ENCODE measurements at regions of chr1 and their contacts with region 1.

Region 1: GRCh38 chr1:204941421-204942338 is 71.0 kb downstream of the NFASC start:
- DNase-seq: peak; percentile 77
- H3K4me3 ChIP-seq: no peak overlapping the region; a peak in 1 of 4 replicates
- H3K27ac ChIP-seq: no peak overlapping the region
- H3K4me1 ChIP-seq: no peaks in the 10 kb centered on the region
- H3K27me3 ChIP-seq: no peaks in the 10 kb centered on the region
- CTCF ChIP-seq: peak; percentile 84
- EP300 ChIP-seq: no peak
- RAD21 ChIP-seq: peak; percentile 77

Region 2: GRCh38 chr1:204565617-204566582 is 375.8 kb before region 1 on chr1:
- CTCF ChIA-PET with region 1: interaction called, 17 read pairs
- POLR2A ChIA-PET with region 1: no interaction called
- DNase-seq: peak; percentile 89
- H3K4me3 ChIP-seq: no peak overlapping the region; a peak in 1 of 4 replicates
- H3K27ac ChIP-seq: no peak overlapping the region
- H3K4me1 ChIP-seq: no peaks in the 10 kb centered on the region; a peak in 1 of 4 replicates
- H3K27me3 ChIP-seq: no peaks in the 10 kb centered on the region
- CTCF ChIP-seq: peak; percentile 82
- EP300 ChIP-seq: no peak
- RAD21 ChIP-seq: peak; percentile 94

Region 3: DNA sequence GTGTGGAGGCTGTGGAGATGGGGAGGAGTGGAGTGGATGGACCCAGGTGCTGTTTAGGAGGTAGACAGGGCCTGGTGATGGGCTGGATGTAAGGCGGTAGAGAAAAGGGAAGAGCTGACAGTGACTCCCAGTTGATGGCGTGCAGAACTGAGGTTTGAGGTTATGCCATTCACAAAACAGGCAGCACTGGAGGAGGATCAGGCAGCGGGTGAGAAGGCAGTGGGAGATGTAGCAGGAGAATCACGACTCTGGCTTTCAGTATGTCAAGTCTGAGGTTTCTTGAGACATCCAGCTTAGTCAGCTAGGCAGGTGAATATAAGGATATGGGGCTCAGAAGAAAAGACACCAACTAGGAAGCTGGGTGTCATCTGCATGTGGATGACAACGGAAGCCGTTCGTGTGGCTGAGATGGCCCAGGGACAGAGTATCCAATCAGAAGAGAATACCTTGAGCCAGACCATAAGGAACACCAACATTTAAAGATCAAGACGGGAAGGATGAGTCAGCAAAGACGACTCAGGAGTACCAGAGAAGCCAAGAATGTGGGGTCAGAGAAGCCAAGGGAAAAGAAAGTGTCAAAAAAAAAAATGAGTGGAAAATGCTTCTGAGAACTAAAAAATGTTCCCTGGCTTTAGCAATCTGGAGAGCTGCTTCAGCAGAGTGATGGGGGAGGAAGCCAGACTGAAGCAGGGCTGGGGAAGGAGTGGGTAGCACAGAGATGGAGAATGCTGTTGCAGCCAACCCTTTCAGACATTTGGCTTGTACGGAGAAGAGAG is 271.3 kb before region 1 on chr1:
- CTCF ChIA-PET with region 1: no interaction called
- POLR2A ChIA-PET with region 1: no interaction called
- DNase-seq: no peak
- H3K4me3 ChIP-seq: no peak overlapping the region
- H3K27ac ChIP-seq: no peak overlapping the region
- H3K4me1 ChIP-seq: peaks cover 0 to 7% of the 10 kb centered on the region in 2 experiments; a peak in 1 of 4 replicates
- H3K27me3 ChIP-seq: 0 out of 2 replicates have a peak, but pooled peaks cover 6% of the 10 kb centered on the region
- CTCF ChIP-seq: no peak
- EP300 ChIP-seq: no peak
- RAD21 ChIP-seq: no peak

Region 4: GRCh38 chr1:204791453-204792353 is 150.0 kb before region 1 on chr1:
- CTCF ChIA-PET with region 1: interaction called, 18 read pairs
- POLR2A ChIA-PET with region 1: no interaction called
- DNase-seq: peak; percentile 75
- H3K4me3 ChIP-seq: peak overlapping the region in 1 of 2 experiments; percentile 42; a peak in 1 of 4 replicates
- H3K27ac ChIP-seq: no peak overlapping the region
- H3K4me1 ChIP-seq: peaks cover 0 to 5% of the 10 kb centered on the region in 2 experiments; a peak in 2 of 4 replicates
- H3K27me3 ChIP-seq: peaks cover 26% of the 10 kb centered on the region; the same call in 1 of the 2 replicates
- CTCF ChIP-seq: peak; percentile 85
- EP300 ChIP-seq: no peak
- RAD21 ChIP-seq: peak; percentile 25; the same call in 1 of the 2 replicates

Region 5: DNA sequence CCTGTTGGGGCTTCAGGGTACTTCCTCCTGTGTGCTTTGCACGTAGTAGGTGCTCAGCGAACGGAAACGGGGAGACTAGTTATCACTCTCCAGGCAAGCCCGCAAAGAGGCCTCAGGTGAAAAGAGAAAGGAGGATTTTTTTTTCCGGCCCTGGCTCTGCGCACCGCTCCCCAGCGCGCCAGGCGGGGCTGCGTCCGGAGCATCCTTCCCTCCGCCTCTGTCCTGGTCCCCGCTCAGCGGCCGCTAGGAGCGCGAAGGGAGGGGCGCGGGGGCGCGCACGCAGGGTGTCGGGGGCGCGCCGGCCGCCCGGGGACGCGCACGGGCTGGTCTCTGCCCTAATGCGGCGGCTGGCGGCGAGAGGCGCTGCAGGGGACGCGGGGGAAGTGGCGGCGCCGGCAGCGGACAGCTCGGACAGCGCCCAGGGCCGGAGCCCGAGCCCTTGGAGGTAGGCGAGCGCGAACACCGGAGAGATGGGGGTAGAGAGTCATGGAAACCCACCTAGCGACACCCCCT is 113.3 kb before region 1 on chr1:
- CTCF ChIA-PET with region 1: interaction called, 132 read pairs
- POLR2A ChIA-PET with region 1: no interaction called
- DNase-seq: peak; percentile 98
- H3K4me3 ChIP-seq: peak overlapping the region; percentile 49 to 54
- H3K27ac ChIP-seq: no peak overlapping the region
- H3K4me1 ChIP-seq: peaks cover 0 to 11% of the 10 kb centered on the region in 2 experiments; a peak in 1 of 4 replicates
- H3K27me3 ChIP-seq: no peaks in the 10 kb centered on the region; the same call in 1 of the 2 replicates
- CTCF ChIP-seq: peak; percentile 26
- EP300 ChIP-seq: no peak
- RAD21 ChIP-seq: no peak

Region 6: DNA sequence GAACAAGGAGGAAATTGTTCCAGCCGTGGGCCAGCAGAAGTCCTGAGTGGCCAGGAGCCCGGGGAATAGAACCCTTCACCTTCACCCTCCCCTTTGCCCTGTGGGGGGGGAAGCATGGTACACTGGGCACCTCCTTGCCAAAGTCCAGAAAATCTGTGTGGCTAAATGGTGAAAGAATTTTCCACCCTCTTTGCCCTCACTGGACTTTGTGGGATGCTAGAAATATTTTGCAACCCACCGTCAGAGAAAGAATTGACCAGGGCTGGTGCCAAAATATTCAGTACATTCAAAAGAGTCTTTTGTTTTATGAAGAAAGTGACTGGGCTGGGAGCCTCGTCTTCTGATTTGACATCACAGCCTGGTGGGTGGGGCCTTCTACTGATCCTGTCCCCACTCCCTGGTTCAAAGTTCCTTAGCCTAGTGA is 56.4 kb before region 1 on chr1:
- CTCF ChIA-PET with region 1: interaction called, 29 read pairs
- POLR2A ChIA-PET with region 1: no interaction called
- DNase-seq: no peak
- H3K4me3 ChIP-seq: no peak overlapping the region
- H3K27ac ChIP-seq: no peak overlapping the region
- H3K4me1 ChIP-seq: peaks cover 0 to 16% of the 10 kb centered on the region in 2 experiments; a peak in 3 of 4 replicates
- H3K27me3 ChIP-seq: no peaks in the 10 kb centered on the region
- CTCF ChIP-seq: no peak
- EP300 ChIP-seq: no peak
- RAD21 ChIP-seq: no peak

Region 7: DNA sequence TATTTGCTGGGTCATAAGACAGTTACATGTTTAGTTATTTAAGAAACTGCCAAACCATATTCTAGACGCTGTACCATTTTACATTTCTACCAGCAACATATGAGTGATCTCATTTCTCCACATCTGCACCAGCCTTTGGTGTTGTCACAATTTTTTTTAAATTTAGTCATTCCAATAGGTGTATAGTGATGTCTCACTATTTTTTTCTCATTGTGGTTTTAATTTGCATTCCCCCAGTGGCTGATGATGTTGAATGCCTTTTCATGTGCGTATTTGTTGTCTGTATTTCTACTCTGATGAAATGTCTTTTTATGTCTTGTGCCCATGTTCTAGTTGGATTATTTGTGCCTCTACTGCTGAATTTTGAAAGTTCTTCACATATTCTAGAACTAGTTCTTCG is 32.6 kb before region 1 on chr1:
- CTCF ChIA-PET with region 1: interaction called, 12 read pairs
- POLR2A ChIA-PET with region 1: no interaction called
- DNase-seq: no peak
- H3K4me3 ChIP-seq: no peak overlapping the region
- H3K27ac ChIP-seq: no peak overlapping the region
- H3K4me1 ChIP-seq: no peaks in the 10 kb centered on the region
- H3K27me3 ChIP-seq: no peaks in the 10 kb centered on the region
- CTCF ChIP-seq: no peak
- EP300 ChIP-seq: no peak
- RAD21 ChIP-seq: no peak

Region 8: GRCh38 chr1:204961765-204962419 is 20.2 kb after region 1 on chr1:
- CTCF ChIA-PET with region 1: interaction called, 24 read pairs
- POLR2A ChIA-PET with region 1: no interaction called
- DNase-seq: no peak
- H3K4me3 ChIP-seq: no peak overlapping the region
- H3K27ac ChIP-seq: no peak overlapping the region
- H3K4me1 ChIP-seq: no peaks in the 10 kb centered on the region; a peak in 1 of 4 replicates
- H3K27me3 ChIP-seq: no peaks in the 10 kb centered on the region; the same call in 1 of the 2 replicates
- CTCF ChIP-seq: no peak
- EP300 ChIP-seq: no peak
- RAD21 ChIP-seq: peak; percentile 25; the same call in 1 of the 2 replicates